ENCODE measurements at regions of chr6 and their contacts with region 1.

Region 1: DNA sequence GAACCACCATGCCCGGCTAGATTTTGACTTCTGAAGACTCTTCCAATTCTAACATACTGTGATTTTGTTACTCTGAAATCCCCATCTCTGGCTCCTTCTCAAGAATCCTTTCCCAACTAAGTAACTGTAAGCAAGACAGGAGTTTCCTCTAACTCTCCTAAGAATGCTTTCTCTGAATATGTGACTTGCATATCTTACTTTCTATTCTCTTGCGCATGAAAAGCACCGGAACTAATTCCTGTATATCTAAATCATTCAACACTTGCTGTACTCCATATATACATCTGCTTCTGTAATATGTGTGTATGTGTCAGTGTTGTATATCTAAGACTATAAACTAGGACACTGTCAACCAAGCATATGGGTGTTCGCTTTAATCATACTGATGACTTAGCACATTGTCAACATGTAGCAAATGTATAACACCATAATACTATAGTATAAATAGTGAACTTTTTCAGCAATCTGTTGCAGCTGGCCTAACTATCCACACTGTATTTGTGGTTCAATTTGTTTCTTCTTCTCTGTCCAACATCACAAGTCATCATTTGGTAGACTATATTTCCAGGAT is 108.1 kb upstream of the PRDM1 start:
- DNase-seq: no peak
- ATAC-seq: no peak

Region 2: DNA sequence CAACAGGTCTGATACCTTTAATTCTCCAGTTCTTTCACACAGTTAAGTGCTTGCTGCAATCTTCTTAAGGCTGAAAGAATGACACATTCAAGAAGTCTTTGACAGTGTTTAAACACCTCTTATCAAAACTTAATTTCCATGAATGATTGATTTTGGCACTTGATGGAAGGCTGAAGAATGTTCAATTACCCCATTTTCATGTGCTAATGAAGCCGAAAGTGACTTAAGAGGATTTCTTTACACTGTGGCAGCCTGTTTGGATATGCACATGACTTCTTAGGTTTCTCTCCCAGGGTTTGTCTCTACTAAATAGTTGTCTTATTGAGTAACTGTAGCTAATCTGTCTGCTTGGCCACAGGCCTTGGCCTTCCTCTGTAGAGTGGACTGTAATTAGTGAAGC is 27.0 kb after region 1 on chr6:
- intact Hi-C with region 1: loop called (anchors 2 kb)
- DNase-seq: no peak
- ATAC-seq: peak; percentile 48

Region 3: GRCh38 chr6:106046116-106046853 is 68.3 kb after region 1 on chr6:
- intact Hi-C with region 1: no loop called
- DNase-seq: no peak
- ATAC-seq: no peak